ENCODE measurements at regions of chr1 and their contacts with region 1.

Region 1: DNA sequence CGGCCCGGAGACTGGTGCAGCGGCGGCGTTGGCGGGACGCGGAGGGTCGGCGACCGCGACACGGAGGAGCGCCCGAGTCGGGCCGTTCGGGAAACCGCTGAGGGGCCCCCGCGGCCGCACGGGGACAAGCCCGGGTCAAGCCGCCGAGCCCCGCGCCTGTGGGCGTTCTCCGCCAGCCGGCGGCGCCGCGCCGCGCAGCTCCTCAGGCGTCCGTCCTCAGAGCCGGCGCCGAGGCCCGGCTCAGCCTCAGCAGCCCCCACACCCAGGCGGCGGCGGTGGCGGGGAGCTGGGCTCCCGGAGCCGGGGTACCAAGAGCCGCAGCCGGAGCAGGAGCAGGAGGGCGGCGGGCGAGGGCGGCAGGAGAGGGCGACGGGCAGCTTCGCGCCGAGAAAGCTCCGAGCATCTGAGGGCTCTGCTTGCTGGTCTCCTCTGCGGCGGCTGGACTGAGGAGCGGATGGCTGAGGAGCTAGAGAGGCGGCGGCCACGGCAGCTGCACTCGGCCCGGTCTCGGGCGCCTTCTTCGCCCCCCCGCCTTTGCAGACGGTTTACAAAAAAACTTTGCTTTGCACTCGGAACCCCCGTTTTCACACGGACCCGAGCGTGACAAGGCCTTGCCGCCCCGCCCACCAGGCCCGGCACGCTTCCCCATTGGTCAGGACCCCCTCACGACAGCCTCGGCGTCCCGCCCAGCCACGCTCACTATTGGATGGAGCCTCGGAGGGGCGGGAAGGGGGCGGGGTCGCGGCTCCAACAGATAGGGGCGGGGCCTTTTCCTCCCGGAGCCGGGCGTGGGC is at the start of gene SLC30A1:
- DNase-seq: peak; percentile 98
- H3K4me3 ChIP-seq: peak within 1 kb of the TSS; percentile 85 to 96 (median 96)
- H3K27ac ChIP-seq: peak within 1 kb of the TSS; percentile 59
- H3K4me1 ChIP-seq: peaks cover 23% of the 10 kb centered on the region
- H3K27me3 ChIP-seq: no peaks in the 10 kb centered on the region
- CTCF ChIP-seq: no peak
- total RNA-seq, gene SLC30A1: 30.2 to 63.0 TPM

Region 2: DNA sequence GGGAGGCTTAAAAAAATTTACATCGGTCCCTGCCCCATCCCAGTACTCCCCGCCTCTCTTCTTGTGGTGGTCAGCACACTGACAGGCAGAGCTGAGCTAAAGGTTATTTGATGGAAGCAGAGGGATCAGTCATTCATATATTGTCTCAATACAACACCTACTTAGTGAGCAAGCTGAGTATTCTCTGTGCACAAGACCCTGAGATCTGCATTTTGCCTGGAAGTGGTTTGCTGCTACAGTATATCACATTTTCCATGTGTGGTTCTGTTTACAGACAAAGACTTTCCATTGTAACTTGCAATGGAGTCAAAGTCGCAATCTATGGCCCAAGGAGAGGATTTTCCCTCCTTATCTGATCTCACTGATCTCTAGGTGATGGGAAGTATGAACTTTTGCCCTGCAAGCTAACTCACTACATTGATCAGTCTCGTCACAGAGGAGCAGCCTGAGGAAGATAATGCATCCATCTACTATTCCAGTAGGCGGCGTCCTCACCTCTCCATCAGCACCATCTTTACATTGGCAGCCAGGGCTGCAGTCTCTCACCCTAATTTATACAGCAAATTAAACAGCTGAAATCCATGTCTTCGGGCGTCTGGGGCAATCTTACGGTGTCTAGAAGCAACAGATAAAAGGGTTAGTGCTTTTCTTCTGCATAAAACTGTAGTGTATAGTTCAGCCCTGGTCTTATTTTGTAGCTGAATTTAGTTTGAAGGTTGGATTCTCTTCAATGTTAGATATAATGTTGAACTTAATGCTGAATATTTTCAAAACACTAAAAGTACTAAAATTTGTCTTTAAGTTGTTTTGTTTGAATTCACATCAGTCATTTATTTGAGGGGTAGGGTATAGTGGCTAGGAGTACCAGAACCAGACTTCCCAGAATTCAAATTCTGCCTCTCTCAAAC is 255.4 kb before region 1 on chr1:
- CTCF ChIA-PET with region 1: no interaction called
- dilution Hi-C with region 1: no loop called
- in situ Hi-C with region 1: no loop called
- intact Hi-C with region 1: loop called (anchors 2 kb)
- DNase-seq: peak; percentile 45
- H3K4me3 ChIP-seq: no peak overlapping the region
- H3K27ac ChIP-seq: no peak overlapping the region
- H3K4me1 ChIP-seq: peaks cover 5% of the 10 kb centered on the region
- H3K27me3 ChIP-seq: no peaks in the 10 kb centered on the region
- CTCF ChIP-seq: peak; percentile 93 to 97

Region 3: DNA sequence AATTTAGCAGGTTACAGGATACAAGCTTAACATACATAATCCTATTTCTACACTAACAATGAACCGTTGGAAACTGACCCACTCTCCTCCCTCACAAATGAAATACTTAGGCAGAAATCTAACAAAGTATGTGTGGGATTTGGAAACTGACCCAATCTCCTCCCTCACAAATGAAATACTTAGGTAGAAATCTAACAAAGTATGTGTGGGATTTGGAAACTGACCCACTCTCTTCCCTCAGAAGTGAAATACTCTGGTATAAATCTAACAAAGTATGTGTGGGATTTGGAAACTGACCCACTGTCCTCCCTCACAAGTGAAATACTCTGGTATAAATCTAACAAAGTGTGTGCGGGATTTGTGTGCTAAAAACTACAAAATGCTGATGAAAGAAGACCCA is 191.9 kb before region 1 on chr1:
- CTCF ChIA-PET with region 1: no interaction called
- dilution Hi-C with region 1: no loop called
- in situ Hi-C with region 1: no loop called
- intact Hi-C with region 1: no loop called
- DNase-seq: no peak
- H3K4me3 ChIP-seq: no peak overlapping the region
- H3K27ac ChIP-seq: no peak overlapping the region
- H3K4me1 ChIP-seq: peaks cover 4% of the 10 kb centered on the region
- H3K27me3 ChIP-seq: no peaks in the 10 kb centered on the region
- CTCF ChIP-seq: no peak

Region 4: DNA sequence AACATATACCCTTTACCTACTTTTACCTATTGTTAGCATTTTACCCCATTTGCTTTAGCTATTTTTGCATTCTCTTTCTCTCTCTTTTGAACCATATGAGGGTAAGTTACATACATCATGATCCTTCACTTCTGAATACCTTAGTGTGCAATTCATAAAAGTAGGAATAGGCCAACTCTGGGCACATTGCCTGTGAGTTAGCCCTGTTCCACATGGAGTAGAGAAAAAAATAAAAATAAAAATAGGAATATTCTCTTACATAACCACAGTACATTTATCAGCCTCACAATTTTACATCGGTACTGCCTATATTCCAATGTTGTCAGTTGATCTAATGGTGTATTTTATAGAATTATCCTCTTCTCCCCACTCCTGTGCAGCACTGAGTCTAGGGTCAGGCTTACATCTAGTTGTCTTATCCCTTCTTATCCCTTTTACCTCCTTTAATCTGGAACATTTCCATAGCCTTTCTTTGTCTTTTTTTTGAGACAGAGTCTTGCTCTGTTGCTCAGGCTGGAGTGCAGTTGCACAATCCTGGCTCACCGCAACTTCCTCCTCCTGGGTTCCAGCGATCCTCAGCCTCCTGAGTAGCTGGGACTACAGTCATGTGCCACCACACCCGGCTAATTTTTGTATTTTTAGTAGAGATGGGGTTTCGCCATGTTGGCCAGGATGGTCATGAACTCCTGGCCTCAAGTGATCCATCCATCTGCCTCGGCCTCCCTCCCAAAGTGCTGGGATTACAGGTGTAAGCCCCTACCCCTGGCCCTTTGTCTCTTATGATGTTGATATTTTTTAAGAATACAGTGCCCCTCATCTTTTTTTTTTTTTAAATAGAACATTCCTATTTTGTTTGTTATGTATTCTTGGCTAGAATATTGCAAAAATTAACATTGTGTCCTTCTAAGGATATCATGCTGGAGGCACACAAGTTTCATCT is 11.2 kb after region 1 on chr1:
- CTCF ChIA-PET with region 1: no interaction called
- dilution Hi-C with region 1: no loop called
- in situ Hi-C with region 1: no loop called
- intact Hi-C with region 1: loop called (anchors 1 kb)
- DNase-seq: peak; percentile 26
- H3K4me3 ChIP-seq: no peak overlapping the region
- H3K27ac ChIP-seq: no peak overlapping the region
- H3K4me1 ChIP-seq: peaks cover 35% of the 10 kb centered on the region
- H3K27me3 ChIP-seq: no peaks in the 10 kb centered on the region
- CTCF ChIP-seq: no peak

Region 5: GRCh38 chr1:211625040-211625439 is 46.2 kb after region 1 on chr1:
- CTCF ChIA-PET with region 1: interaction called, 7 read pairs
- dilution Hi-C with region 1: no loop called
- in situ Hi-C with region 1: no loop called
- intact Hi-C with region 1: loop called (anchors 1 kb)
- DNase-seq: peak; percentile 25
- H3K4me3 ChIP-seq: no peak overlapping the region
- H3K27ac ChIP-seq: no peak overlapping the region
- H3K4me1 ChIP-seq: no peaks in the 10 kb centered on the region
- H3K27me3 ChIP-seq: peaks cover 6% of the 10 kb centered on the region
- CTCF ChIP-seq: peak; percentile 35 to 57

Region 6: DNA sequence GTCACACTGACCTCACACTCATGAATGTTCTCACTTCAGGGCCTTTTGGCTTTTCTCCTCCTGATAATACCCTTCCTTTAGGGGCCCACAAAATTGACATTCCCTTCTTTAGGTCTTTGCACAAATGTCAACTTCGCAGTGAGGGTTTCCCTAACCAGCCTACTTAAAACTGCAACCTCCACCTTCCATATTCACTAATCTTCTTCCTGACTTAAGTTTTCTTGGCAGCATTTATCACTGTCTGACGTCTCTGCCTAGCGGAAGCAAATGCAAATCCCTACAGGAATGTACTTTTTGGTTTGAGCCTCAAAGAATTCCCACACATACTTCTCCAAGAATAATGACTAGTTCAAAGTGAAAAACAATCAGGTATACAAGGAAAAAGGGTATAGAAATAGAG is 423.7 kb after region 1 on chr1:
- CTCF ChIA-PET with region 1: no interaction called
- dilution Hi-C with region 1: no loop called
- in situ Hi-C with region 1: no loop called
- intact Hi-C with region 1: no loop called
- DNase-seq: no peak
- H3K4me3 ChIP-seq: no peak overlapping the region
- H3K27ac ChIP-seq: no peak overlapping the region
- H3K4me1 ChIP-seq: no peaks in the 10 kb centered on the region
- H3K27me3 ChIP-seq: no peaks in the 10 kb centered on the region
- CTCF ChIP-seq: no peak

Region 7: DNA sequence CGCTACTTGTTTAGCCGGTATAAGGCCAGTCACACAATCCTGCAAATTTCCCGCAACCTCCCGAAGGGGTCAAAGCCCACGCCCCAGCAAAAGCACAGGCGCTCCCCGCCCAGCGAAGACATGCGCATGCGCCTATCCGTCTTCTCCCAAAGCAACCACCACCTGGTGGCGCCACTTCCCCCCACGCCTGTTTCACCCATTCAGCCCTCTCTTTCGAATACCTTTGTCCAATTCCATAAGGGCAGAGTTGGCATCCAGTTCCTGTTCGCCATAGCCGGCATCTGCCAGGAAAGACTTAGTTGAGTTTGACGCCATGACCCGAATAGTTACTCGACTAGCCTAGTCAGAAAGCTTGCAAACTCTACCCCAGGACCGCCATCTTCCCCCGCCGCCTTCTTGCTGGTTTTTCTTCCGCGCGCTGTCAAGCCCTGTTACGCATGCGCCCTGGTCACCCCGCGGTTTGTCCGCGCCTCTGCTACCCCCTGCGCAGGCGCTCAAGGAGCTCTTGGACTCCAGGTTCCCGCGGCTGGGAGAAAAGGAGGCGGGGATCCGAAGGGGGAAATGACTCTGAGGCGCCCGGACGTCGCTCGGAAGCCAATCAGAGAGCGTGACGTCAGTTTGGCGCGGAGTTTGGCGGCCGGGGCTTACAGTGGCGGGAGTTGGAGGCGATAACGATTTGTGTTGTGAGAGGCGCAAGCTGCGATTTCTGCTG is 456.4 kb after region 1 on chr1 and contains the starts of genes DTL and INTS7:
- CTCF ChIA-PET with region 1: no interaction called
- dilution Hi-C with region 1: no loop called
- in situ Hi-C with region 1: no loop called
- intact Hi-C with region 1: loop called (anchors 10 kb)
- DNase-seq: peak; percentile 99
- H3K4me3 ChIP-seq: peak within 1 kb of the TSS; percentile 89 to 98 (median 95)
- H3K27ac ChIP-seq: peak within 1 kb of the TSS; percentile 86
- H3K4me1 ChIP-seq: peaks cover 30% of the 10 kb centered on the region
- H3K27me3 ChIP-seq: no peaks in the 10 kb centered on the region
- CTCF ChIP-seq: peak; percentile 77 to 84
- total RNA-seq, gene DTL: 3.2 to 24.6 TPM
- total RNA-seq, gene INTS7: 16.8 to 24.3 TPM

Measured in mammary epithelial cell (primary cell).